Mammary epithelial cell (primary cell): ENCODE measurements at regions of chr10 and their contacts with region 1.

Region 1: GRCh38 chr10:93383997-93384396 is 98.1 kb downstream of the MYOF start:
- DNase-seq: peak; percentile 100
- H3K4me3 ChIP-seq: peak overlapping the region in 1 of 3 experiments; percentile 14
- H3K27ac ChIP-seq: peak overlapping the region; percentile 98
- H3K4me1 ChIP-seq: peaks cover 37% of the 10 kb centered on the region
- H3K27me3 ChIP-seq: no peaks in the 10 kb centered on the region
- CTCF ChIP-seq: no peak

Region 2: DNA sequence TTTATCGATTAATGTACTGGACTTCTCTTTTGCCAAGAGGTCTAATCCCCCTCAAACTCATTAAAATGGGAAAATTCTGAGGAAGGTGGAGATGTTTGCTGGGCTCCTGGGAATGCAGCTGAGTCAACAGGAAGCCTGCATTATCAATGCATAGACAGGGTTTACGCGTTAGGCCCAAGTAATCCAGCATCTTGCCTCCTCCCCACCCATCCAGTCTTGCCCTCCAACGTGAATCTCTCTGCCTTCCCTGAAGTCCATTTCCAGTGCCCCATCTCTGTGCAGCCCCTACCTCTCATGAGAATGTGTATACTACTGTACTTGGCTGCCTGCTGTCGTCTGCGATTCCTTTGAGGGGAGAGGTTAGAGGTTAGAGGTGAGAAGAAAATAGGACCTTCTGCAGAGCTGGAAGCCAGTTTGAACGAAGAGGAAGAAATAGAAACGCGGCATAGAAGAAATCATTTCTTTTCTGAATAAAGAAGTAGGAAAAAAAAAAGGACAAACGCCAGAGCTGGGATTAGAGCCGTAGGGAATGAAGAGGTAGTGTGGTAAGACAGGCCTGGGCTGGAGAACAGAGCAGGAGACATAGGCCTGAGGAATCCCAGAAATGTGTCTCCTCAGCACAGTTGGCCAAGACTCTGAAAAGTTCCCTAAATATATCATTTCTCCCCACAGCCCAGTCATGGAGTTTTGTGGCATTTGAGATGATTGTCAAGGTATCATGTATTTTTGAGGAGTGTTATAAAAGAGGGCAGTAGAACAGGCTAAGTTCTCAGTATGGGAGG is 22.6 kb after region 1 on chr10:
- CTCF ChIA-PET with region 1: no interaction called
- dilution Hi-C with region 1: no loop called
- in situ Hi-C with region 1: no loop called
- intact Hi-C with region 1: loop called (anchors 2 kb)
- DNase-seq: peak; percentile 45
- H3K4me3 ChIP-seq: no peak overlapping the region
- H3K27ac ChIP-seq: peak overlapping the region; percentile 77
- H3K4me1 ChIP-seq: peaks cover 15% of the 10 kb centered on the region
- H3K27me3 ChIP-seq: no peaks in the 10 kb centered on the region
- CTCF ChIP-seq: no peak

Region 3: GRCh38 chr10:93445097-93445960 is 61.3 kb after region 1 on chr10:
- CTCF ChIA-PET with region 1: no interaction called
- dilution Hi-C with region 1: no loop called
- in situ Hi-C with region 1: no loop called
- intact Hi-C with region 1: no loop called
- DNase-seq: peak; percentile 99
- H3K4me3 ChIP-seq: no peak overlapping the region
- H3K27ac ChIP-seq: peak overlapping the region; percentile 97
- H3K4me1 ChIP-seq: peaks cover 51% of the 10 kb centered on the region
- H3K27me3 ChIP-seq: no peaks in the 10 kb centered on the region
- CTCF ChIP-seq: no peak